ENCODE measurements at regions of chr16 and their contacts with region 1.

Region 1: DNA sequence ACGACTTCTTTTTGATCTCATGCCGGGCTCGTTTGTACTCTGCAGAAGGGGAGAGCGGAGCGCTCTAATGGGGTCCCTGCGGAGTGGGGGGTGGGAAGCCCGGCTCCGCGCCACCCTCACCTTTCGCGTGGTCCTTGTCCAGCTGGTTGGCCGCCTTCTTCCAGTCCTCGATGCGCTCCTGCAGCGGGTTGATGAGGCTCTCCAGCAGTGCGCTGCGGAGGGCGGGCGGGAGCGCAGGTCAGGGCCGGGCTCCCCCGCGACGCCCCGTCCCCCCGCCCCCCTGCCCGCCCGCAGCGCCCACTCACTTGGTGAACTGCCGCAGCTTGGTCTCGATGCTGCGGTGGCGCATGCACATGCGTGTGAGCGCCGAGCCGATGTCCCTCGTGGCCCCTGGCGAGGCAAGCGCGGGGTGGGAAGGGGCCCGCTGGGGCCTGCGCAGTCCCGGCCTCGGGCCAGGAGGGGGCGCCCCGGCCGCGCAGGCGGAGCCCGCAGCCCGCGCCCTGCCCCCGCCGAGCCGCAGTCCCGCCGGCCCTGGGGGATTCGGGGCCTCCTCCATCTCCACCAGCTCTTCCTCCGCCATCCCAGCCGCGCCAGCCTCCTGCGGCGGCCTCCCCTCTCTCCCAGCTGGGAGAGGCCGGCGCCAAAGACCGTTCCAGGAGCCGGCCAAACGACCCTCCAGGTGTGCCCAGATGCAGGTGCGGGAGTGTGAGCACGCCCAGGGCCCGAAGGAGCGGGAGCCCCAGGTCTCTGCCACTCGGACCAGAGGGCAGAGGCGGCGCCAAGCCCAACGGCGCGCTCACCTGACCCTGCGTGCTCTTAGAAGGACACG is 6.0 kb downstream of the MTSS2 start:
- DNase-seq: no peak
- H3K4me3 ChIP-seq: no peak overlapping the region
- CTCF ChIP-seq: no peak
- POLR2A ChIP-seq: no peak

Region 2: GRCh38 chr16:70298988-70299938 is 380.6 kb before region 1 on chr16 and contains the start of gene DDX19B:
- intact Hi-C with region 1: no loop called
- DNase-seq: peak; percentile 68 to 96
- H3K4me3 ChIP-seq: peak within 1 kb of the TSS; percentile 94
- CTCF ChIP-seq: no peak
- POLR2A ChIP-seq: peak in 1 of 2 donors; percentile 40
- total RNA-seq, gene DDX19B: 36.9 to 53.3 (median 48.2) TPM

Region 3: DNA sequence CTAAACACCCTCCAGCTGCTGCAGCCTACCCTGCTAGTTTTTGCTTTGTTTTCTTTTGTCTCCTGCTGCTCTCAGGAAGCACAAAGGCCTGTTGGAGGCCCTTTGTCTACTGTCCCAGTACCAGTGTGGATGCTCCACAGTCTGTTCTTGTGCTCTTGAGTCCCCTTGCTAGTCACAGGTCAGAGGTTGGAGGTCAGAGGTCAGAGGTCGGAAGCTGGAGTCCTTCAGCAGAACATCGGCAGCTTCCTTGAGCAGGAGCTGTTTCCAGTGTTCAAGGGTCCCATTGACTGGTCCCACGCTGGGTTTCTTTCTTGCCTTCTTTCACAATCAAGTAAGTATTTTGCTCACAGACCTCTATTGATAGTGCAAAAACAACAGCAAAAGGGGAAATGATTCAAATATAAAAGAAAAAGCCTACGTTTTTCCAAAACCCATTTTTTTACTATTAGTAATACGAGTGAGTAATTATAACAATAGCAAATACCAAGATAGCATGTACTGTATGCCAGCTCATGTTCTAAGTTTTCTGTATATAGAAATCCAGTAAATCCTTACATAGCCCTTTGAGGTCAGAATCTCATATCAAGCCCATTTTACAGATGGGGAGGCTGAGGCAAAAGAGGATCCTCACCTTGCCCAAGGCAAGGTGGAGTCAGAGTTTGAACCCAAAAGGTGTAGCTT is 44.4 kb before region 1 on chr16:
- intact Hi-C with region 1: no loop called
- DNase-seq: no peak
- H3K4me3 ChIP-seq: no peak overlapping the region
- CTCF ChIP-seq: no peak
- POLR2A ChIP-seq: no peak

Region 4: DNA sequence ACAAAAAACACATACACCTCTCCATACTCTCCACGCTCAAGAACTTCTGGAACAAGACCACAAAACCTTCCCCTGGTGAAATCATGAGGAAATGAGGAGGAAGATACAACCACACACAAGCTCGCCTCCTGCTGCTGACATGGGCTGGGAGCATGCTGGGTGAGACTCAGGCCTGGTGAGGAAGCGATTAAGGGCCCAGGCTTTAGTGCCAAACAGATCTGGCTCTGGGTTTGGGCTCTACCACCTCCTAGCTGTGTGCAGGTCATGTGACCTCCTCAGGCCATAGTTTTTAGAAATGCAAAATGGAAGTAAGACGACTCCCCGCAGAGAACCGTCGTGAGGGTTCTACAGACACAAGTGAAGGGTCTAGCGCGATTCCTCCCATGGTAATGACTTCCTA is 79.8 kb after region 1 on chr16:
- intact Hi-C with region 1: loop called (anchors 5 kb)
- DNase-seq: no peak
- H3K4me3 ChIP-seq: no peak overlapping the region
- CTCF ChIP-seq: no peak
- POLR2A ChIP-seq: no peak

Measured in lower leg skin (tissue), 4 donors.